ENCODE measurements at regions of chr5 and their contacts with region 1.

Region 1: GRCh38 chr5:76175051-76175666 is 92.0 kb downstream of the SV2C start:
- DNase-seq: peak; percentile 72
- H3K4me3 Mint-ChIP-seq: peak overlapping the region; percentile 30
- H3K27ac Mint-ChIP-seq: peak overlapping the region; percentile 92
- H3K4me1 Mint-ChIP-seq: peaks cover 42% of the 10 kb centered on the region
- H3K27me3 Mint-ChIP-seq: no peaks in the 10 kb centered on the region

Region 2: GRCh38 chr5:76074487-76075065 is 100.6 kb before region 1 on chr5:
- CTCF ChIA-PET with region 1: interaction called, 25 read pairs
- POLR2A ChIA-PET with region 1: no interaction called
- DNase-seq: peak; percentile 37
- H3K4me3 Mint-ChIP-seq: no peak overlapping the region
- H3K27ac Mint-ChIP-seq: no peak overlapping the region
- H3K4me1 Mint-ChIP-seq: no peaks in the 10 kb centered on the region
- H3K27me3 Mint-ChIP-seq: peaks cover 70% of the 10 kb centered on the region

Region 3: DNA sequence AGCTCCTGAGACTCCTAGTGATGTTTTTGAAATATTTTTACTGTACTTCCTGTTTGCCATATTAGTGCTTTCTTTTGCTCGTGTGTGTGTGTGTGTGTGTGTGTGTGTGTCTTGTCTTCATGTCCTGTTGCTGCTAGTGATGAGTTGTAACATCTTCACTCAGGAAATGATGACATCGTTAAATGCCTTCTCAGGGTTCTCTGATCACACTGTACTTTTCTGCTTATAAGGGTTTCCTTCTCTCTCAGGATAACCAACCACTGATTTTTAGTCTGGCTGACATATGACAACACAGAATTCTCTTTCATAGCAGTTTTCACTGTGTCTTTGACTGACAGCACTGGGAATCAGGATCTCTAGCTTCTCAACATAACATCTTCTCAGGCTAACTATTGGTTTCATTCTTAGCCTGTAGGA is 75.9 kb before region 1 on chr5:
- CTCF ChIA-PET with region 1: interaction called, 13 read pairs
- POLR2A ChIA-PET with region 1: interaction called, 3 read pairs
- DNase-seq: peak; percentile 48
- H3K4me3 Mint-ChIP-seq: no peak overlapping the region
- H3K27ac Mint-ChIP-seq: peak overlapping the region; percentile 29
- H3K4me1 Mint-ChIP-seq: peaks cover 13% of the 10 kb centered on the region
- H3K27me3 Mint-ChIP-seq: peaks cover 28% of the 10 kb centered on the region

Region 4: DNA sequence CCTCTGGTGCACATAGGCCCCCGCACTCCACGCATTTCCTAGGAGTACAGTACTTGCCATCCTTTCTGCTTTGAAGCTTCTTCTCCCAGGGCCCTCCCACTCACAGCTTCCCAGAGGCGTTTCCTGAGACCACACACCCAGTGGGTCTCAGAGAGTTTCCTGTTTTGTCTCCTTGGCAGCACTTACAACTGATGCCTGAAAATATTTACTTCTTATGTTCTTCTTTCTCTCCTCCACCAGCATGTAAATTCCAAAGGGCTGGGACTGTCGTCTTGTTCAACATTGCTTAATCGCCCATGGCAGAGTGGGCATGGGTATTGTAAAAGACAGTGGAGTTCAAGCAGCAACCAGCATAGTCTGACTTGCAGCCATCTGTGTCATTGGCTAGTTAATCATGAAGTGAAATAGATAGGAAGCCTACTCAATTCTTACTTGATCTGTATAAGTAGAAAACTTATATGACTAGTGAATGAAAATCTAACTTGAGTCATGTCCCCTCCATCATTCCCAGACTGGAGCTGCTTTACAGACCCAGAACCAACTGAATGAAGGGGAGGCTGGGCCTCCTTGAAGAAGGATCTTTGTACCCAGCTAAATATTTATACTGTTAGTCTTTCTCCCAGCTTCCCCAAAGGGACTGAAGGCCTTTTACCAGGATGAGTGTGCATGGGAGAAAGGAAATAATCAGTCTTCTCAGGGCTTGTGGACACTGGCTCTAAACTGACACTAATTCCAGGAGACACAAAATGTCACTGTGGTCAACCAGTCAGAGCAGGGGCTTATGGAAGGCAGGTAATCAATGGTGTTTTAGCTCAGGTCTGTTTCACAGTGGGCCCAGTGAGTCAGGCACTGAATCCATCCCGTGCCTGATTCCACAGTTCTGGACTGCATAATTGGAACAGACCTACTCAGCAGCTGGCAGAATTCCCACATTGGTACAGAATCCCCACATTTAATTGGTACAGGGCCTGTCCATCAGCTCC is 24.5 kb after region 1 on chr5:
- CTCF ChIA-PET with region 1: interaction called, 13 read pairs
- POLR2A ChIA-PET with region 1: no interaction called
- DNase-seq: no peak
- H3K4me3 Mint-ChIP-seq: no peak overlapping the region
- H3K27ac Mint-ChIP-seq: no peak overlapping the region
- H3K4me1 Mint-ChIP-seq: peaks cover 1% of the 10 kb centered on the region
- H3K27me3 Mint-ChIP-seq: peaks cover 14% of the 10 kb centered on the region

Region 5: GRCh38 chr5:76256116-76256889 is 81.1 kb after region 1 on chr5:
- CTCF ChIA-PET with region 1: interaction called, 42 read pairs
- POLR2A ChIA-PET with region 1: interaction called, 4 read pairs
- DNase-seq: peak; percentile 75
- H3K4me3 Mint-ChIP-seq: no peak overlapping the region
- H3K27ac Mint-ChIP-seq: no peak overlapping the region
- H3K4me1 Mint-ChIP-seq: peaks cover 10% of the 10 kb centered on the region
- H3K27me3 Mint-ChIP-seq: peaks cover 16% of the 10 kb centered on the region

Region 6: GRCh38 chr5:76402886-76403765 is 228.0 kb after region 1 on chr5 and contains the start of gene IQGAP2:
- CTCF ChIA-PET with region 1: interaction called, 11 read pairs
- POLR2A ChIA-PET with region 1: interaction called, 12 read pairs
- DNase-seq: peak; percentile 86
- H3K4me3 Mint-ChIP-seq: peak within 1 kb of the TSS; percentile 93
- H3K27ac Mint-ChIP-seq: peak within 1 kb of the TSS; percentile 99
- H3K4me1 Mint-ChIP-seq: peaks cover 63% of the 10 kb centered on the region
- H3K27me3 Mint-ChIP-seq: no peaks in the 10 kb centered on the region
- total RNA-seq, gene IQGAP2: 118 to 124 TPM

Measured in activated CD4-positive, alpha-beta memory T cell treated with anti-CD3 and anti-CD28 coated beads, Interleukin-2, amount 10 ng/mL, durations not matched to agents 7 days and 5 days (primary cell).